Activated CD4-positive, alpha-beta T cell treated with anti-CD3 and anti-CD28 coated beads, Interleukin-2, amount 10 ng/mL, durations not matched to agents 24 days and 14 days (primary cell): ENCODE measurements at regions of chr15 and their contacts with region 1.

Region 1: DNA sequence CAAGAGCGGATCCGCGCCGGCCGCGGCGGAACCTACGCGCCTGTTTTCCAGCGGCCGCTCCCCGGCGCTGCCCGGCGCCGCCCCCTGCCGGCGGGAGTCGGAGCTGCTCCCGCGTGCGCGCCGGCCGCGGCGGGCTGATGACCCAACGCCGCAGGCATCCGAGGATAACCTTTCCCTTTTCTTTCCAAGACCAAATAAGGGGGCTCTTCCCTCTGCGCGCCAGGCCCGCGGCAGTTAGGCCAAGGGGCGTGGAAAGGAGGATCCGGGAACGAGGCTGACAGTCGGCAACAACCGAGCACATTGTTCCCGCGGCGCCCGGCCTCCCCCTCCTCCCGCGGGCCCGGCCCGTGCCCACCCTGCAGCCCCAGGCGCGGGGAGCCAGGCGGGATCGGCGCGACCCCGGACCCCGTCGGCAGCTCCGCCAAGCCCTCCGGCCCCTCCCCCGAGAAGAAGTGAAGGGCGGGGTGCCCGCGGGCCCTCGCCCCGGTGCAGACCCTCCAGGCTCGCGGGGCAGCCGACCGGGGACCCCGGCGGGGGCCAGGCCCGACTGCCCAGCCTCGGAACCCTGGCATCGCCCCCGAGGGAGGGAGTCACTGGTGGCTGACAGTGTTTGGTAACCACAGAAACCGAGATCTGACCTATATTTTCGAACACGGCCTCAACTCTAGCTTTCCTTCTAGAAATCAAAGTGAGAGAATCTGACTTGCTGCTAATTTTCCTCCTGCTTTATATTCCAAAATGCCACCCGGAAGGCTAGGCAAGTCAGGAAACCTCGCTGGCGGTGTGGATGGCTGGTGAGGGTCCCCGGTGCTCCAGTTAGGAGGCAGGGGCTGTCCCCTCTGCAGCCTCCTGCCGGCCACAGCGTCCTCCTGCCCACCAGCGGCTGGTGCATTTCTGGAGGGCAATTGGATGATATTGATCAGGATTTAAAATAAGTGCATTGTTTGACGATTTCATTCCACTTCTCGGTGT is 45.6 kb upstream of the SYNM start:
- DNase-seq: peak; percentile 88
- H3K4me3 Mint-ChIP-seq: peak overlapping the region; percentile 69
- H3K27ac Mint-ChIP-seq: no peak overlapping the region
- H3K4me1 Mint-ChIP-seq: peaks cover 5% of the 10 kb centered on the region
- H3K27me3 Mint-ChIP-seq: peaks cover 44% of the 10 kb centered on the region

Region 2: GRCh38 chr15:98442379-98442833 is 616.9 kb before region 1 on chr15:
- intact Hi-C with region 1: loop called (anchors 5 kb)
- DNase-seq: peak; percentile 85
- H3K4me3 Mint-ChIP-seq: no peak overlapping the region
- H3K27ac Mint-ChIP-seq: no peak overlapping the region
- H3K4me1 Mint-ChIP-seq: no peaks in the 10 kb centered on the region
- H3K27me3 Mint-ChIP-seq: peaks cover 5% of the 10 kb centered on the region

Region 3: DNA sequence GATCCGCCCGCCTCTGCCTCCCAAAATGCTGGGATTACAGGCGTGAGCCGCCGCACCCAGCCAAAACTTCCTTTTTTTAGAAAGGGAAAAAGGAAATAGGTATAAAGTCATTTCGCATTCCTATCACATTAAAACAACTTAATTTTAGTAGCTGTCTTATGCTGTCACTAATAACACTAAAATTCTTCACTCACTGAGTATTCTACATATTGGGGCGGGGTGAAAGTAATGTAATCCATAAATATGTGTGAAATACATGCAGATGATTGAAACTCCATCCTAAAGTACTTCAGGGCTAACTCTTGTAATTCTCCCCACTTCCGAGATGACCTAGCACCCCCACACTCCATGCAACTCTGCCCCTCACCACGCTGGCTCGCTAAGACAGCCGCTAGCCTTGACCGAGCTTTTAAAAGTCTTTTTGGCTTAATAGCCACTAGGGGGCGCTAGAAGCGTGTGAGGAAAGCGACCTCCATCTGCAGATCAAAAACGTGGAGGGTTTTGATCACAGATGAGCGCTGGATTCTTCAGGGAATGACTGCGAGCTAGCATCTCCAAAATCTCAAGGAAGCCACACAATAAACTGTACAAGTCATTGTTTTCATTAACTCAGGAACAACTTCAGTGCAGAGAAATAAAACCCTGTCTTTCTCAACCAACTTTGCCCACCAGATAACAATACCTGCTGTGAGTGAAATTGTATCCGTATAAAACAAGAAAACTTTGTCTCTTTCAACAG is 540.3 kb before region 1 on chr15:
- intact Hi-C with region 1: loop called (anchors 1 kb)
- DNase-seq: peak; percentile 83
- H3K4me3 Mint-ChIP-seq: no peak overlapping the region
- H3K27ac Mint-ChIP-seq: no peak overlapping the region
- H3K4me1 Mint-ChIP-seq: peaks cover 5% of the 10 kb centered on the region
- H3K27me3 Mint-ChIP-seq: peaks cover 4% of the 10 kb centered on the region

Region 4: GRCh38 chr15:98779463-98780071 is 279.7 kb before region 1 on chr15:
- intact Hi-C with region 1: loop called (anchors 5 kb)
- DNase-seq: peak; percentile 92
- H3K4me3 Mint-ChIP-seq: no peak overlapping the region
- H3K27ac Mint-ChIP-seq: no peak overlapping the region
- H3K4me1 Mint-ChIP-seq: peaks cover 23% of the 10 kb centered on the region
- H3K27me3 Mint-ChIP-seq: no peaks in the 10 kb centered on the region

Region 5: GRCh38 chr15:98865397-98866339 is 193.6 kb before region 1 on chr15:
- intact Hi-C with region 1: loop called (anchors 5 kb)
- DNase-seq: peak; percentile 91
- H3K4me3 Mint-ChIP-seq: peak overlapping the region; percentile 87
- H3K27ac Mint-ChIP-seq: peak overlapping the region; percentile 93
- H3K4me1 Mint-ChIP-seq: peaks cover 34% of the 10 kb centered on the region
- H3K27me3 Mint-ChIP-seq: no peaks in the 10 kb centered on the region

Region 6: GRCh38 chr15:99014803-99015676 is 44.3 kb before region 1 on chr15:
- intact Hi-C with region 1: loop called (anchors 2 kb)
- DNase-seq: peak; percentile 87
- H3K4me3 Mint-ChIP-seq: peak overlapping the region; percentile 82
- H3K27ac Mint-ChIP-seq: peak overlapping the region; percentile 79
- H3K4me1 Mint-ChIP-seq: peaks cover 4% of the 10 kb centered on the region
- H3K27me3 Mint-ChIP-seq: peaks cover 25% of the 10 kb centered on the region